GM23248 (cell line): ENCODE measurements at regions of chr13 and their contacts with region 1.

Region 1: DNA sequence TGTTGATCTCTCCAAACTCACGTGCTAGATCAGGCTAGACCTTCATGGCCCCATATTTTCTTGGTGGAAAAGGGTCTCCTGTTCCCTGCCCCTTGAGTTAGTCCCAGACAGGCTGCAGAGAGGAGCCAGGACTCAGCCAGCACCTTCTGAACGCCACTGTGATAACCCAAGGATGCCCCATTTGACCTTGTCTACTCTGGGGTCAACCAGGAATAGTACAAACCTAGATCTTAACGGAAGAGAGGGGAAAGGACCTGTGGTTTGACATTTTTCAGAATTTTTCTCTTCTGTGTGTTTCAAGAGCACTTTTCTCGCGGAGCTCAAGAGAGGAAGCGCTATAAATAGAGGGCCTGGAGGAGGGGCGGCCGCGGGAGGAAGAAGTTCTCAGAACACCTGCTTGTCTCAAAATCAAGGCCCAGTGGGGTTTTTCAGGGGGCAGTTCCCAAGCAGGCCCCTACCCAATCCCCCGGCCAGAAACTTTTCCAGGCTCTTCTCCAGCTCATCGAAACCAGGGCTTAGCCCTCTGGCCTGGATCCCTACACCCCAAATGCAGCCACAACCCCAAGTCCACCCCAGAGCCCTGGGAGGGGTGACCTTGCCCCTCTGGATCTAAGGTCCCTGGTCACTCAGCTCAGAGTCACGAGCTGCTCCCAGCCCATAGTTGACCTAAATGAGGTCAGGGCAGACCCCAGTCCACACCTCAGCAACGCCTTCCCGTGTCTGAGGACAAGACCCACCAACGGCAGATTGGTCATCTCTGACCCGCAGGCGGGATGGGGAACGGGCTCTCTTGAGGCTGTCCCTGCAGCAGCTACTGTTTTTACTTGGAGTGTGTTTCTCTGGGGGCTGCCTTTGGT is 75.6 kb upstream of the TM9SF2 start:
- DNase-seq: no peak
- H3K4me3 ChIP-seq: no peak overlapping the region
- H3K27ac ChIP-seq: no peak overlapping the region
- H3K4me1 ChIP-seq: no peaks in the 10 kb centered on the region
- H3K27me3 ChIP-seq: peaks cover 24% of the 10 kb centered on the region; the same call in 1 of the 2 replicates

Region 2: GRCh38 chr13:99176309-99177276 is 249.1 kb before region 1 on chr13:
- in situ Hi-C with region 1: loop called (anchors 10 kb)
- DNase-seq: peak; percentile 62
- H3K4me3 ChIP-seq: no peak overlapping the region
- H3K27ac ChIP-seq: no peak overlapping the region
- H3K4me1 ChIP-seq: no peaks in the 10 kb centered on the region
- H3K27me3 ChIP-seq: peaks cover 8% of the 10 kb centered on the region; the same call in 1 of the 2 replicates

Region 3: DNA sequence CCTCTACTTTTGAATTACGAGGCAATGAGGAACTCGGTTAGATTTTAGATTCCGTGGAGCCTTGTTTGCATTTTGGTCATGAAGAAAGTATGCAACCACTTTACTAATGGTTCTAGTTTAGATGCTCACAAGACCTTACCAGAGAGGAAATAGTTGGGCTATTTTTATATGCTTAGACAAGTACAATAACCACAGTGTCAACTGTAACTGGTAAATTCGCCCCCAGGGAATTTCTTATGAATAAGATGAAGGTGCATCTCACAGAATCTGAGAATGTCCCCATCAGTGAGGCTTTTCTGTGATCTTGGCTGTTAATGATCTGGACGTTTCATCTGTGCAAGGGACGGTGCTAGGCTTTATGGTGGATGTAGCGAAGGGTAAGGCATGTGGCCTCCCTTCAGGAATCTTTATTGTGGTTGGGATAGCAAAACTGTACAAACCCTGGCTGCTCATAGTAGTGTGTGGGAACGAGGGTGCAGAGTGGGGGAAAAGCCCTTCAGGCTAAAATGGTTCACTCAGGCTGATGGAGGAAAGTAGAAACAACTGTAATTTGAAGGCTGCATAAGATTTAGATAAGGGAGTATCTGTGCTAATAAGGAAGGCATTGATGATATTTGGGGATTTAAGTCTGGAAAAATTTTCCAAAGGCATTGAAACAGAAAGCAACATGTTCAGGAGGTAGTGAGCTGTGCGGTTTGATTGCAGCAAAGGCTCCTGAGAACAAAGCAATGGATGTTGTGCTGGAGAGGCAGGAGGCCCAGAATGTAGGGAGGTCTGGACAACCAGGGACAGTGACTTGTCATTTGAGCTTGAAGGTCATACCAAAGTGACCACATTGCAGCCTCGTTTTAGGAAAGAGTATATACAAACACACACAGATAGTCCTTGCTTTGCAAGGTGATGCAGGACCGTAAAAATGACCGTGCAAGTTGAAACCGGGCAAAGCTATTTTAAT is 196.7 kb before region 1 on chr13:
- in situ Hi-C with region 1: no loop called
- DNase-seq: peak; percentile 84
- H3K4me3 ChIP-seq: peak overlapping the region; percentile 22; the same call in 1 of the 2 replicates
- H3K27ac ChIP-seq: peak overlapping the region; percentile 53
- H3K4me1 ChIP-seq: peaks cover 26% of the 10 kb centered on the region
- H3K27me3 ChIP-seq: no peaks in the 10 kb centered on the region